Mammary epithelial cell (primary cell): ENCODE measurements at regions of chr16 and their contacts with region 1.

Region 1: GRCh38 chr16:48623304-48624016 is 13.5 kb upstream of the N4BP1 start:
- DNase-seq: peak; percentile 87
- H3K4me3 ChIP-seq: peak overlapping the region; percentile 31 to 48 (median 47)
- H3K27ac ChIP-seq: peak overlapping the region; percentile 23
- H3K4me1 ChIP-seq: peaks cover 8% of the 10 kb centered on the region
- H3K27me3 ChIP-seq: no peaks in the 10 kb centered on the region
- CTCF ChIP-seq: peak; percentile 93 to 100

Region 2: GRCh38 chr16:48244080-48244862 is 379.2 kb before region 1 on chr16 and contains the start of gene LONP2:
- CTCF ChIA-PET with region 1: no interaction called
- dilution Hi-C with region 1: no loop called
- in situ Hi-C with region 1: no loop called
- intact Hi-C with region 1: loop called (anchors 10 kb)
- DNase-seq: peak; percentile 93
- H3K4me3 ChIP-seq: peak within 1 kb of the TSS; percentile 76 to 93 (median 84)
- H3K27ac ChIP-seq: peak within 1 kb of the TSS; percentile 78
- H3K4me1 ChIP-seq: peaks cover 25% of the 10 kb centered on the region
- H3K27me3 ChIP-seq: no peaks in the 10 kb centered on the region
- CTCF ChIP-seq: no peak
- total RNA-seq, gene LONP2: 62.8 to 72.8 TPM

Region 3: GRCh38 chr16:48365581-48366164 is 257.8 kb before region 1 on chr16:
- CTCF ChIA-PET with region 1: interaction called, 6 read pairs
- dilution Hi-C with region 1: loop called (anchors 25 kb)
- in situ Hi-C with region 1: no loop called
- intact Hi-C with region 1: loop called (anchors 1 kb)
- DNase-seq: peak; percentile 91
- H3K4me3 ChIP-seq: peak overlapping the region; percentile 51 to 62 (median 61)
- H3K27ac ChIP-seq: peak overlapping the region; percentile 99
- H3K4me1 ChIP-seq: peaks cover 34% of the 10 kb centered on the region
- H3K27me3 ChIP-seq: no peaks in the 10 kb centered on the region
- CTCF ChIP-seq: peak in 1 of 2 donors; percentile 22

Region 4: DNA sequence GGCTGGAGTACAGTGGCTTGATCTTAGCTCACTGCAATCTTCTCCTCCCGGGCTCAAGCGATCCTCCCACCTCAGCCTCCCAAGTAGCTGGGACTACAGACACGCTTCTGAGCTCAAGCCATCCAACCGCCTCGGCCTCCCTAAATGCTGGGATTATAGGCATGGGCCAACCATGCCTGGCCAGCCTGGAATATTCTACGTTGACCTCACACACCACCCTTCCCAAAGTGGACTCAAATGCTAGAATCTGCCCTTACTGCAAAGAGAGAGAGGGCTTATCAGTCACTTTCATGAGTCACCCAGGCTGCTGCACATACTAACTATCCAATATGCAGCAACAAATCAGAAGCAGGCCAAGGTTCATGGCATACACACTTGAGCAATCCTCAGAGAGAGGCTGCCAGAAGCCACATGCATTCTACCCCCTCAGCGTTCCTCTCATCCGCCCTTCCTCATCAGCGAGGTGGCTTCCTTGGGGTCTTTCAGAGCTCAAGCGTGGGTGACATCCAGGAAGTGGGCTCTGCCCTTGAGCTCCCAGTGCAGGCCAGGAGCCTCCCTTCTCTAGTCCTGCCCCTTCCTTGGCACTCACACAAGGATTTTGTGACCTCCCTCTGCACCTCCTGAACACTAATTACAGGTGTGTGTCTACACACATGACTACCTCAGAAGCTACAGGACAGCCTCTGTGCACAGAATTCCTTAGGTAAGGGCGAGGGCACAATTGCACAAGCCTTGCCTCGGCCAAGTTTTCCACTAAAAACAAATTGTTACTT is 213.4 kb before region 1 on chr16:
- CTCF ChIA-PET with region 1: no interaction called
- dilution Hi-C with region 1: no loop called
- in situ Hi-C with region 1: no loop called
- intact Hi-C with region 1: no loop called
- DNase-seq: peak; percentile 72
- H3K4me3 ChIP-seq: peak overlapping the region in 1 of 3 experiments; percentile 29
- H3K27ac ChIP-seq: no peak overlapping the region
- H3K4me1 ChIP-seq: peaks cover 11% of the 10 kb centered on the region
- H3K27me3 ChIP-seq: no peaks in the 10 kb centered on the region
- CTCF ChIP-seq: no peak

Region 5: DNA sequence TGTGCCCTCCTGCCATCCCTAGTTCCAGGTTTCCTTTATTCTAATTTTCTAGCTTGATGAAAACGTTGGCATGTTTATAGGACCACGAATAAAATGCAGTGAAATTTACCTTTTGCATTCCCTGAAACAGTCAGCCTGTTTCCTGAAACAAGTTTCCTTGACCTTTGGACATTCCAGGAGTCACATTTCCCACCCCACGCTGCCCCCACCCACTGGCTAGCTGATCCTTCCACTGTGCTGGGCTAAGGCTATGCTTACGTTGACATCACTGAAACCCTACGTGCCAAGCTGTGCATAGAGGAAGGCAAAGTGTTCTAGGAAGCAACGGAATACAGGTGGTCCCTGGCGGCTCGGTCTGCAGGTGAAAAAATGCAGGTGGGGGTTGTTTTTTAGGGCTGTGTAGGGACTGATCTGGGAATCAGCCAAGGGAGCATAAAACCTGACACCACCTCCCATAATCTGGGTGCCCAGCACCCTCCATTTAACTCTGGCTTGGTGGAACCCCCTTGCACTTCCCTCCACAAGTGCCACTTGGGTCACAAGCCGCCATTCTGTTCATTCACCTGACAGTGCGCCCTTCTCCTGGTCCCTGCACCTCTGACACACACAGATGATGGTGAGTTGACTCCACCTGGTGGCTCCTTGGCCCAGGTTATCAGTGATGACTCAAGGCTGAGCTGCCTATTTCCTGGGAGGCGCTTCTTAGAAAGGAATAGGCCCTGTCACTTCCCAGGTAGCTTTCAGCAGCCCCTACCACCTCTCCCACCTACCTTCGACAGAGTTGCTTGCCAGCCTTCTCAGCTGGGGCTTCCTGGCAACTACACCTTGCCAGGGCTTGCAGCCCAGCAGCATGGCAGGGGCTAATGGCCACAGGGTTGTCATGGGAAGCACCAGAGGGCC is 97.2 kb before region 1 on chr16:
- CTCF ChIA-PET with region 1: interaction called, 9 read pairs
- dilution Hi-C with region 1: no loop called
- in situ Hi-C with region 1: no loop called
- intact Hi-C with region 1: loop called (anchors 1 kb)
- DNase-seq: peak; percentile 75
- H3K4me3 ChIP-seq: no peak overlapping the region
- H3K27ac ChIP-seq: peak overlapping the region; percentile 9
- H3K4me1 ChIP-seq: peaks cover 5% of the 10 kb centered on the region
- H3K27me3 ChIP-seq: no peaks in the 10 kb centered on the region
- CTCF ChIP-seq: peak; percentile 54 to 81

Region 6: GRCh38 chr16:48542020-48542473 is 81.4 kb before region 1 on chr16:
- CTCF ChIA-PET with region 1: interaction called, 14 read pairs
- dilution Hi-C with region 1: no loop called
- in situ Hi-C with region 1: loop called (anchors 5 to 10 kb)
- intact Hi-C with region 1: loop called (anchors 1 kb)
- DNase-seq: peak; percentile 46
- H3K4me3 ChIP-seq: no peak overlapping the region
- H3K27ac ChIP-seq: no peak overlapping the region
- H3K4me1 ChIP-seq: peaks cover 15% of the 10 kb centered on the region
- H3K27me3 ChIP-seq: no peaks in the 10 kb centered on the region
- CTCF ChIP-seq: peak; percentile 57 to 71

Region 7: GRCh38 chr16:48583075-48584065 is 40.1 kb before region 1 on chr16:
- CTCF ChIA-PET with region 1: interaction called, 10 read pairs
- dilution Hi-C with region 1: no loop called
- in situ Hi-C with region 1: no loop called
- intact Hi-C with region 1: no loop called
- DNase-seq: no peak
- H3K4me3 ChIP-seq: no peak overlapping the region
- H3K27ac ChIP-seq: peak overlapping the region; percentile 57
- H3K4me1 ChIP-seq: peaks cover 25% of the 10 kb centered on the region
- H3K27me3 ChIP-seq: no peaks in the 10 kb centered on the region
- CTCF ChIP-seq: no peak